HCT116 (cell line): ENCODE measurements at regions of chr7 and their contacts with region 1.

Region 1: DNA sequence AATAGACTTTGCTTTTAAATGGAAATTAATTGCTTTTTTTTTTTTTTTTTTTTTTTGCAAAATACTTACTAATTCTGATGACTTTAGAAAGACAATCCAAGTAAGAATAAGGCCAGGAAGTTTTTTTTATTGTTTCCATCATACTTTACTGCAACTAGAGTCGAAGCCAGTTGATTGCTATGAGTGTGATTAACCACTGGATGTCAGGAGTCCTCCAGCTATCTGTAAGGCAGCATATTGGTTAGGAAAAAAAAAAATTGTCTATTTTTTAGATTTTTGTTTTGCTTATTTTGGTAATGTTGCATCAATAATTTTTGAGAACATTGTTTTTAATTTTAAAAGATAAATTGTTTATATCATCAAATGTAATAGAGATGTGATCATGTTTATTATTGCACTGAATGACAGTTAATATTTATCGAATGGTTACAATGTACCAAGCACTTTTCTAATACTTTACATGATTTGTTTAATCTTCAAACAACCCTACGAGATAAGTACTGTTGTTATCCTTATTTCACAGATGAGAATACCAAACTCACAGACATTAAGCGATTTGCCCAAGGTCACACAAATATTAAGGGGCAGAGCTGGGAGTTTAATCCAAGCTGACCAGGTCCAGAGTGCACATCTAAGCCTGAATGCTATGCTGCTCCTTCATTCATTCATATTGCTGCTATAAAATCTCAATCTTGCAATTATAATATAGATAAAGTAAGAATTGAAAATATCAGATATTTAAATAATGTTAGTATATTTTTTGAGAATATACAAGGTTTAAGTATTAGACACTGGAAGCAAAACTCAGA is 19.9 kb upstream of the LMOD2 start:
- DNase-seq: no peak
- ATAC-seq: peak; percentile 75; the same call in 1 of the 2 replicates
- H3K4me3 ChIP-seq: no peak overlapping the region
- H3K27ac ChIP-seq: no peak overlapping the region
- H3K4me1 ChIP-seq: peaks cover 0 to 8% of the 10 kb centered on the region in 2 experiments; a peak in 1 of 4 replicates
- H3K27me3 ChIP-seq: no peaks in the 10 kb centered on the region
- CTCF ChIP-seq: peak; percentile 49 to 74 (median 65)
- POLR2A ChIP-seq: no peak
- RAD21 ChIP-seq: peak; percentile 86

Region 2: GRCh38 chr7:123709525-123709924 is 73.8 kb after region 1 on chr7:
- CTCF ChIA-PET with region 1: no interaction called
- POLR2A ChIA-PET with region 1: no interaction called
- RAD21 ChIA-PET with region 1: no interaction called
- intact Hi-C with region 1: loop called (anchors 5 kb)
- DNase-seq: no peak
- ATAC-seq: no peak
- H3K4me3 ChIP-seq: no peak overlapping the region
- H3K27ac ChIP-seq: no peak overlapping the region
- H3K4me1 ChIP-seq: no peaks in the 10 kb centered on the region
- H3K27me3 ChIP-seq: no peaks in the 10 kb centered on the region
- CTCF ChIP-seq: no peak
- POLR2A ChIP-seq: no peak
- RAD21 ChIP-seq: no peak

Region 3: DNA sequence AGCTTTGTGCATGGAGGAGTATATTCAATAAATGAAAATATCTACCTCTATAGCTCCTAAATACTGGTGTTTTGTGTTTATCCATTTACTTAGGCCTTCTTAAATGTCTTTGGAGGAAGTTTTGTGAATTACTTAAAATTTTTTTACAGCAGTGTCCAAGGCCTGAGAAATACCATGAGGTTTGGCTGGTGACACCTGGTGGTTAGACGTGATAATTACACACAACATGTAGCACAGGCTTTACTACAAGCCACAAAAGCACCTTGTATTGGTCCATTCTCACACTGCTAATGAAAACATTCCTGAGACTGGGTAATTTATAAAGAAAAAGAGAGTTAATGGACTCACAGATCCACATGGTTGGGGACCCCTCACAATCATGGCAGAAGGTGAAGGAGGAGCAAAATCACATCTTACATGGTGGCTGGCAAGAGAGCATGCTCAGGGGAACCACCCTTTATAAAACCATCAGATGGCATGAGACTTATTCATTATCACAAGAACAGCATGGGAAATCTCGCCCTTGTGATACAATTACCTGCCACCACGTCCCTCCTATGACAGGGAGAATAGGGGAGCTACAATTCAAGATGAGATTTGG is 229.9 kb after region 1 on chr7:
- CTCF ChIA-PET with region 1: interaction called, 6 read pairs
- POLR2A ChIA-PET with region 1: no interaction called
- RAD21 ChIA-PET with region 1: no interaction called
- intact Hi-C with region 1: loop called (anchors 1 kb)
- DNase-seq: peak; percentile 49
- ATAC-seq: peak; percentile 98
- H3K4me3 ChIP-seq: no peak overlapping the region
- H3K27ac ChIP-seq: no peak overlapping the region
- H3K4me1 ChIP-seq: no peaks in the 10 kb centered on the region
- H3K27me3 ChIP-seq: no peaks in the 10 kb centered on the region
- CTCF ChIP-seq: peak; percentile 55 to 72 (median 65); a peak in 5 of 6 replicates
- POLR2A ChIP-seq: no peak
- RAD21 ChIP-seq: peak; percentile 69

Region 4: GRCh38 chr7:123871998-123872867 is 236.5 kb after region 1 on chr7:
- CTCF ChIA-PET with region 1: interaction called, 23 read pairs
- POLR2A ChIA-PET with region 1: no interaction called
- RAD21 ChIA-PET with region 1: interaction called in 1 of 2 experiments, 4 read pairs
- intact Hi-C with region 1: loop called (anchors 1 kb)
- DNase-seq: peak; percentile 51
- ATAC-seq: peak; percentile 99
- H3K4me3 ChIP-seq: no peak overlapping the region
- H3K27ac ChIP-seq: no peak overlapping the region
- H3K4me1 ChIP-seq: no peaks in the 10 kb centered on the region
- H3K27me3 ChIP-seq: no peaks in the 10 kb centered on the region
- CTCF ChIP-seq: peak; percentile 54 to 67 (median 58); a peak in 5 of 6 replicates
- POLR2A ChIP-seq: no peak
- RAD21 ChIP-seq: peak; percentile 85

Region 5: GRCh38 chr7:124152859-124153692 is 517.3 kb after region 1 on chr7:
- CTCF ChIA-PET with region 1: interaction called, 5 read pairs
- POLR2A ChIA-PET with region 1: no interaction called
- RAD21 ChIA-PET with region 1: no interaction called
- intact Hi-C with region 1: loop called (anchors 2 kb)
- DNase-seq: peak; percentile 47
- ATAC-seq: peak; percentile 97
- H3K4me3 ChIP-seq: no peak overlapping the region
- H3K27ac ChIP-seq: no peak overlapping the region
- H3K4me1 ChIP-seq: no peaks in the 10 kb centered on the region
- H3K27me3 ChIP-seq: no peaks in the 10 kb centered on the region
- CTCF ChIP-seq: peak; percentile 44 to 65 (median 52); a peak in 5 of 6 replicates
- POLR2A ChIP-seq: no peak
- RAD21 ChIP-seq: peak; percentile 53